ENCODE measurements at regions of chr6 and their contacts with region 1.

Region 1: GRCh38 chr6:144087789-144088426 is 7.5 kb downstream of the SF3B5 start:
- DNase-seq: no peak
- ATAC-seq: peak; percentile 68
- H3K4me3 ChIP-seq: no peak overlapping the region
- H3K27ac ChIP-seq: no peak overlapping the region
- H3K4me1 ChIP-seq: peaks cover 9% of the 10 kb centered on the region
- H3K27me3 ChIP-seq: no peaks in the 10 kb centered on the region
- CTCF ChIP-seq: peak; percentile 31 to 54 (median 32); a peak in 5 of 6 replicates
- EP300 ChIP-seq: no peak
- POLR2A ChIP-seq: no peak
- RAD21 ChIP-seq: peak; percentile 46

Region 2: DNA sequence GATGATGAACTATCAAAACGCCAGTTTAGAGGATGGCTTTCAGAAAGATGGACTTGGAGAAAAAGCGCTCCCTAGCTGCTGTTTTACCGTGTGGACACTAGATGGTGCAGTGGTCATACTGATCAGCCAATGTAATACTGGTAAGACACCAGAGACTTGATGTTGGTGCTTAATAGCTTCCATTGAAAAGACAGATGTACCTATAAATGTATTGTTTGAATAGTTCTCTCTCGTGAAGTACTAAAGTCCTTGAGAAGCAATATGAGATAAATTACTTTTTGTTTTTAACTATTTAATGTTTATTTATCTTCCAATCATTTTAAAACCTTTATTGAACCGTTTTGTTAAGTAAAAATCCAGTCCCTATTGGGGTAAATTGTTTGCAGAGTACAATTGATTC is 512.5 kb before region 1 on chr6:
- CTCF ChIA-PET with region 1: interaction called, 62 read pairs
- POLR2A ChIA-PET with region 1: no interaction called
- RAD21 ChIA-PET with region 1: interaction called, 21 read pairs
- SMC1A ChIA-PET with region 1: interaction called, 22 read pairs
- in situ Hi-C with region 1: loop called (anchors 5 kb)
- intact Hi-C with region 1: loop called (anchors 1 kb)
- DNase-seq: peak; percentile 27
- ATAC-seq: peak; percentile 94
- H3K4me3 ChIP-seq: no peak overlapping the region
- H3K27ac ChIP-seq: no peak overlapping the region
- H3K4me1 ChIP-seq: no peaks in the 10 kb centered on the region
- H3K27me3 ChIP-seq: no peaks in the 10 kb centered on the region; a peak in 2 of 4 replicates
- CTCF ChIP-seq: peak; percentile 63 to 81 (median 79)
- EP300 ChIP-seq: no peak
- POLR2A ChIP-seq: no peak
- RAD21 ChIP-seq: peak; percentile 89

Region 3: DNA sequence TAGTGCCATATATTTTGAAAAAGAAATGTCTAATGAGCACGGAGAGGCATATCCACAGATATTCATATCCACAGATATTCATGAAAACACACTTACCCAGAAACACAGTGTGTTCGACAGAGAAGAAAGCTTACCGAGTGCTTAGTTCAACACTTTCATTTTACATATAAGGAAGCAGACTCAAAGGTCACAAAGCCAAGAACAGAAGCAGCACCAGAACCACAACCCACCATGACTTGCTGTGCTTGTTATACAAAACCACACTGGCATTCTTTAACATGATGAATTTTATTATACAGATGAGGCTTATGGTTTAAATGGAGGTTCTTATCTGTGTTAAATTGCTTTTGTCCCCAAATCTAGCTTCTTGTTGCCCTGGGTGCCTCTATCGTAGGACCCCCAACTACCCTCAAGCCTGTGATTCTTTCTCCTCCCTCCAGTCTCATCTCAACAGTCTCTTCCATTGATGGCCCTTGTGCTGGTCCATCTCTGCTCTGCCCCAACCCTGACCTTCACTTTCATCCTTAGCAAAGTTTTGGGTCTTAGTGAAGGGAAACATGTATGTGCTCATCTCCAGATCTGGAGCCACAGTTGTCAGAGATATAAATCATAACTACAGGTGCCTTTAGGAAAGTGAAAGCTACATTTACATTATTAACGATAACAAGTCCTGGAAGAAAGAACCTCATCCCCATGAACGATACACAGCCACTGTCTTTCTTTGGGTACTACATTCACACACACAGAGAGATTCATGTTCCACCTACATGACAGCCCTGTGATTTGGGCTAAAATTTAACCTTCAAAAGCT is 32.6 kb before region 1 on chr6:
- CTCF ChIA-PET with region 1: interaction called, 26 read pairs
- POLR2A ChIA-PET with region 1: interaction called, 4 read pairs
- RAD21 ChIA-PET with region 1: interaction called, 12 read pairs
- SMC1A ChIA-PET with region 1: interaction called, 23 read pairs
- in situ Hi-C with region 1: no loop called
- intact Hi-C with region 1: no loop called
- DNase-seq: no peak
- ATAC-seq: peak; percentile 93
- H3K4me3 ChIP-seq: peak overlapping the region; percentile 69
- H3K27ac ChIP-seq: peak overlapping the region; percentile 84
- H3K4me1 ChIP-seq: peaks cover 5% of the 10 kb centered on the region
- H3K27me3 ChIP-seq: no peaks in the 10 kb centered on the region
- CTCF ChIP-seq: no peak
- EP300 ChIP-seq: no peak
- POLR2A ChIP-seq: no peak
- RAD21 ChIP-seq: no peak

Region 4: DNA sequence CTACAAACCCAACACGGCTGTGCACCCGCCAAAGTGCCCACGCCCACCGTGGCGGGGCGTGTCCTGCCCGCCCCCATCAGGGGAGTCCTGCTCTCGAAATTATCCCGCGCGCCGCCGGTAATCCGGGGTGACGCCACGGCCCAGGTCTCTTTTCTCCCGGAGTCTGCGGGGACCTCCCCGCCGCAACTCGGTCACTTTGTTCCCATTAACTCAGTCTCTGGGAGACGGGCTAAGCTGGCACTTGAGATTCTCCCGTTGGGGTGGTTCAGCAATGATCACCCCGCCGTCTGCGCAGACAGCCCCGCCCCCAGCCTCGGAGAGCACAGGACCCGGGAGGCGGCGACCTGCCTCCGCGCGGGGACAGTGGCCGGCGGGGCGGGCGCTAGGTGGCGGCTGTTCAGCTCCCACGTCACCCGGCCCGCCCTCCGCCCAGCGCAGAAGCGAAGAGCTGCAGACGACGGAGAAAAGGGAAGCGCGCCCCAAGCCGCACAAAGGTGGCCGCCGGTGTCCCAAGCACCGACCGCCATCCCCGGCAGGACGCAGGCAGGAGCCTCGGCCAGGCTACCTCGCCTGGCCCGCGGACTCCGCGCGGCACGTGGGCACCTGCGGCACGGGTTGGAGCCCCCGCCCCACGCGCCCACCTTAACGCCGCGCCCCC is 24.0 kb before region 1 on chr6:
- CTCF ChIA-PET with region 1: interaction called, 13 read pairs
- POLR2A ChIA-PET with region 1: interaction called, 9 read pairs
- RAD21 ChIA-PET with region 1: interaction called, 10 read pairs
- SMC1A ChIA-PET with region 1: interaction called, 13 read pairs
- in situ Hi-C with region 1: no loop called
- intact Hi-C with region 1: no loop called
- DNase-seq: peak; percentile 59
- ATAC-seq: peak; percentile 90
- H3K4me3 ChIP-seq: peak overlapping the region; percentile 85
- H3K27ac ChIP-seq: peak overlapping the region; percentile 94
- H3K4me1 ChIP-seq: peaks cover 10% of the 10 kb centered on the region
- H3K27me3 ChIP-seq: no peaks in the 10 kb centered on the region
- CTCF ChIP-seq: peak; percentile 13 to 41 (median 16); a peak in 3 of 6 replicates
- EP300 ChIP-seq: no peak
- POLR2A ChIP-seq: peak; percentile 97
- RAD21 ChIP-seq: no peak

Region 5: GRCh38 chr6:144075187-144075586 is 12.7 kb before region 1 on chr6:
- CTCF ChIA-PET with region 1: interaction called, 12 read pairs
- POLR2A ChIA-PET with region 1: interaction called, 3 read pairs
- RAD21 ChIA-PET with region 1: interaction called, 10 read pairs
- SMC1A ChIA-PET with region 1: interaction called, 8 read pairs
- in situ Hi-C with region 1: no loop called
- intact Hi-C with region 1: no loop called
- DNase-seq: no peak
- ATAC-seq: peak; percentile 92
- H3K4me3 ChIP-seq: no peak overlapping the region; the same call in 1 of the 2 replicates
- H3K27ac ChIP-seq: peak overlapping the region; percentile 68
- H3K4me1 ChIP-seq: peaks cover 15% of the 10 kb centered on the region
- H3K27me3 ChIP-seq: no peaks in the 10 kb centered on the region
- CTCF ChIP-seq: no peak
- EP300 ChIP-seq: no peak
- POLR2A ChIP-seq: no peak
- RAD21 ChIP-seq: no peak

Region 6: DNA sequence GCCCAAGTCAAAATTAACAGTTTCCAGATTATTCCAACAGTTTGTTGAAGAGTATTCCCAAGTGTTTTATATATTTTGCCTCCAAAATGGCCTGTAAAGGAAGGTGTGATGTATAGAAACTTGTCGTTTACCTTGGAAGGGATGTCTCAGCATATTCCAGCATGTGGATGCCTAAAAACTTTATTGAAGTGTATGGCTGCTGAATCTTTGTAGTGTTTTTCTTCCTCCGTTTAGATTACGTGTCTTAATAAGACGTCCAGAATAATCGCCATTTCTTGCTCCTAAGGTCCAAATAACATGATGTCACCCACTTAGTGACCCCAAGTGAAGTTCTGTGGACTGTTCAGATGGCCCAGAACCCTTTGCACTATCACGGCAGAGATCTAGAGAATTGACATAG is 25.5 kb after region 1 on chr6:
- CTCF ChIA-PET with region 1: no interaction called
- POLR2A ChIA-PET with region 1: no interaction called
- RAD21 ChIA-PET with region 1: no interaction called
- SMC1A ChIA-PET with region 1: no interaction called
- in situ Hi-C with region 1: no loop called
- intact Hi-C with region 1: no loop called
- DNase-seq: no peak
- ATAC-seq: no peak
- H3K4me3 ChIP-seq: no peak overlapping the region
- H3K27ac ChIP-seq: no peak overlapping the region
- H3K4me1 ChIP-seq: no peaks in the 10 kb centered on the region
- H3K27me3 ChIP-seq: no peaks in the 10 kb centered on the region; a peak in 1 of 4 replicates
- CTCF ChIP-seq: no peak
- EP300 ChIP-seq: no peak
- POLR2A ChIP-seq: no peak
- RAD21 ChIP-seq: no peak

Region 7: DNA sequence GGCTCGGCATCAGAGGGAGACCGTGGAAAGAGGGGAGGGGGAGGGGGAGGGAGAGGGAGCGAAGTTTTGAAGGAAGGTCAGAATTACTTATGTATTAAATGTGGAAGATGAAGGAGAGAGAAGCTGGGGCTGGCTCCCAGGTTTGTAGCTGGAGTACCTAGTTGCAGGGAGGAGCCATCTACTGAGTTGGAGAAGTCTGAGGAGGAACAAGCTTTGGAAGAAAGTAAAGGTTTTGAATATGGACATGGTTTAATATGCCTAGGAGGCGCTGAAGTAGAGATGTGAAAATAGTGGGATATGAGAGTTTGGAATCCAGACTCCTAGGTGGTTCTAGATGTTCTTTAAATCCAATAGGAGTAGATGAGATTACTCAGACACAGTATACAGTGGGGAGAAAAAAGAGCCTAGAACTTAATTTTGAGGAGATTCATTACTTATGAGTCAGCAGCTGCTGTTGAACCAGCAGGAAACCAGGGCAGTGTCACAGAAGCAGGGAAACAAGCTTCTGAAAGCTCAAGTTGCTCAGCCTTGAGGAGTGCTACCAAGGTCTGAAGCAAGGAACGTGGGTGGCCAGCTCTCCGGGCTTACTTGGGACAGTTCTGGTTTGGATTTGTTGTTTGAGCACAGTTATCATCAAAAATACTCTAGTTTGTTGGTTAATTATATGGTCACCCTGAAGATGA is 346.5 kb after region 1 on chr6:
- CTCF ChIA-PET with region 1: no interaction called
- POLR2A ChIA-PET with region 1: no interaction called
- RAD21 ChIA-PET with region 1: no interaction called
- SMC1A ChIA-PET with region 1: no interaction called
- in situ Hi-C with region 1: no loop called
- intact Hi-C with region 1: no loop called
- DNase-seq: no peak
- ATAC-seq: no peak
- H3K4me3 ChIP-seq: no peak overlapping the region
- H3K27ac ChIP-seq: no peak overlapping the region
- H3K4me1 ChIP-seq: no peaks in the 10 kb centered on the region
- H3K27me3 ChIP-seq: no peaks in the 10 kb centered on the region
- CTCF ChIP-seq: no peak
- EP300 ChIP-seq: no peak
- POLR2A ChIP-seq: no peak
- RAD21 ChIP-seq: no peak

Measured in GM12878 (cell line).